HCT116 (cell line): ENCODE measurements at regions of chr10 and their contacts with region 1.

Region 1: DNA sequence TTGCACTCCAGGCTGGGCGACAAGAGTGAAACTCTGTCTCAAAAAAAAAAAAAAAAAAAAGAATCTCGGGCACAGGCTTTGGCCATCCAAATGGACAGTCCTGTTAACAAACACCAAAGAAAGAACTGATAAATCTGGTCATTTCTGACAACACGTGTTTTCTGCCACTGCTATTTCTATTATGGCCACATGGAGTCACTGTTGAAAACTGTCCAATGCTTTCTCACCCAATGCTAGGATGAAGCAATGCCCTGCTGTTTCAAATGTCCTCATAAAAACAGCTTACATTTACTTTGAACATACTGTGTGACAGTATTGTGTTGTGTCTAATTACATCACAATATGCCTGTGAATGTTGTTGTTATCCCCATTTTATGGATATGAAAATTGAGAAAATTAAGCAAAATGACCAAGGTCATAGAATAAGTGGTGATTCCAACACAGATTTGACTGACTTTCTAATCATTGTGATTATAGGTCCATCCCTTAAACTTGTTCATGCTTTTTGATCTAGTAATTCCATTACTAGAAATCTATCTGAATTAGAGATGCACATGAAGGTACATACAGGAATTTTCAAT is 19.9 kb upstream of the MAP3K8 start:
- DNase-seq: peak; percentile 40
- ATAC-seq: peak; percentile 81
- H3K4me3 ChIP-seq: no peak overlapping the region
- H3K27ac ChIP-seq: no peak overlapping the region
- H3K4me1 ChIP-seq: peaks cover 0 to 3% of the 10 kb centered on the region in 2 experiments; a peak in 1 of 4 replicates
- H3K27me3 ChIP-seq: no peaks in the 10 kb centered on the region
- CTCF ChIP-seq: peak; percentile 70 to 75 (median 71); a peak in 5 of 6 replicates
- POLR2A ChIP-seq: no peak
- RAD21 ChIP-seq: peak; percentile 82

Region 2: GRCh38 chr10:30433730-30434272 is 19.7 kb after region 1 on chr10 and contains the start of gene MAP3K8:
- CTCF ChIA-PET with region 1: interaction called, 6 read pairs
- POLR2A ChIA-PET with region 1: no interaction called
- RAD21 ChIA-PET with region 1: no interaction called
- intact Hi-C with region 1: loop called (anchors 1 kb)
- DNase-seq: peak; percentile 71
- ATAC-seq: peak; percentile 81
- H3K4me3 ChIP-seq: peak within 1 kb of the TSS; percentile 78 to 86
- H3K27ac ChIP-seq: peak within 1 kb of the TSS; percentile 90
- H3K4me1 ChIP-seq: peaks cover 19 to 46% of the 10 kb centered on the region in 2 experiments
- H3K27me3 ChIP-seq: no peaks in the 10 kb centered on the region
- CTCF ChIP-seq: no peak
- POLR2A ChIP-seq: no peak
- RAD21 ChIP-seq: 0 out of 2 replicates have a peak, but pooled peaks have one; percentile 2
- total RNA-seq, gene MAP3K8: 4.5 TPM

Region 3: DNA sequence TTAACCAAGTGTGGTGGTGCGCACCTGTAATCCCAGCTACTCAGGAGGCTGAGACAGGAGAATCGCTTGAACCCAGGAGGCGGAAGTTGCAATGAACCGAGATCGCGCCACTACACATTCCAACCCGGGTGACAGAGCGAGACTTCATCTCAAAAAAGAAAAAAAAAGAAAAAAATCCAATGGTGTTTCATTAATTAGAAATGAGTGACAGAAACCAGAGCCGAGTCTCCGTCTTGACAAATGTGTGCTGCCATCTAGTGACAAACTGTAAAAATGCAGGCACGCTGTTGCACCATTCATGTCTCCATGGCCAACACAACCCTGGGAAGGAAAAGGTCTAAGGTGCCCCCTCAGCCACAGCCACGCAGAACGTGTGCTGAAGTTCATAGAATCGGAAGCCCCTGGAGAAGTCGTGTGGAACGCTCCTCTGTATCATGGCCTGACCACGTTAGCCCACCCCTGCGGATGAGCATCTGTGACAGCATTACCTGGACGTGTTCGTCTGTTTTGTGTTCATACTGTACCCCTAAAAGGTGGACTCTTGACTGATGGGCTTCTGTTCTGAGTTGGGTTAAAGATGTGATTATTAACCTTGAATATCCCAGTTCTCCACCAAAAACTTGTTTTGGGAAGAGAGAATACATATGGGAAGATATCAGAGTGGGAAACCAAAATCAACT is 120.5 kb after region 1 on chr10:
- CTCF ChIA-PET with region 1: interaction called, 4 read pairs
- POLR2A ChIA-PET with region 1: no interaction called
- RAD21 ChIA-PET with region 1: no interaction called
- intact Hi-C with region 1: loop called (anchors 1 kb)
- DNase-seq: peak; percentile 64
- ATAC-seq: peak; percentile 90
- H3K4me3 ChIP-seq: no peak overlapping the region
- H3K27ac ChIP-seq: no peak overlapping the region
- H3K4me1 ChIP-seq: peaks cover 0 to 14% of the 10 kb centered on the region in 2 experiments; a peak in 2 of 4 replicates
- H3K27me3 ChIP-seq: no peaks in the 10 kb centered on the region
- CTCF ChIP-seq: peak; percentile 73 to 85 (median 75)
- POLR2A ChIP-seq: no peak
- RAD21 ChIP-seq: peak; percentile 91

Region 4: DNA sequence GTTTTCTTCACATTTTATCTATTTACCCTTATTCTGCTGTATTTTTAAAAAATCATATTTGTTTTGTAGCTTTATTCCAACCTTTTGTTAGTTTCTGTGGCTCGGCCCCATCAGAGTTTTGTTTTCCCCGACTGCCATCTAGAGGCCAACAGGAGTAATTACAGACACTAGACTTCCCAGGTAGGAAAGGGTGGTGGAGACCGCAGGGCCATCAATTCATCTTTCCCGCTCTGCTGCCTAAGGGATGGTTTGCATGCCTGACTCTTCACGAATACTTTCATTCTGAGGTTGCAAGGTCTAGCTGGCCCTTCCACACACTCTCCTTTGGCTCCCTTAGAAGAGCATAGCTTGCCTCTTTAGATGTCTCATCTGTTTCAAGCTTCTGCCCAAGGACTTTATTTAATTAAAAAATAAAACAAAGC is 177.2 kb after region 1 on chr10:
- CTCF ChIA-PET with region 1: interaction called, 17 read pairs
- POLR2A ChIA-PET with region 1: no interaction called
- RAD21 ChIA-PET with region 1: interaction called in 1 of 2 experiments, 5 read pairs
- intact Hi-C with region 1: loop called (anchors 5 kb)
- DNase-seq: peak; percentile 37
- ATAC-seq: peak; percentile 97
- H3K4me3 ChIP-seq: no peak overlapping the region
- H3K27ac ChIP-seq: no peak overlapping the region
- H3K4me1 ChIP-seq: 0 out of 4 replicates have a peak, but pooled peaks cover 0 to 2% of the 10 kb centered on the region in 2 experiments
- H3K27me3 ChIP-seq: no peaks in the 10 kb centered on the region
- CTCF ChIP-seq: peak; percentile 69 to 76 (median 75)
- POLR2A ChIP-seq: no peak
- RAD21 ChIP-seq: peak; percentile 76